Adrenal gland (tissue), 19 donors: ENCODE measurements at regions of chr7 and their contacts with region 1.

Region 1: GRCh38 chr7:992709-993607 is 10.0 kb downstream of the CYP2W1 start:
- DNase-seq: peak; percentile 97 to 99 (median 98)
- H3K4me3 ChIP-seq: no peak overlapping the region
- H3K27ac ChIP-seq: no peak overlapping the region
- H3K4me1 ChIP-seq: peaks cover 7 to 14% of the 10 kb centered on the region in 2 donors
- H3K27me3 ChIP-seq: no peaks in the 10 kb centered on the region
- CTCF ChIP-seq: peak; percentile 96 to 100 (median 100)
- POLR2A ChIP-seq: peak in 1 of 2 donors; percentile 24

Region 2: GRCh38 chr7:1065263-1066260 is 72.6 kb after region 1 on chr7:
- intact Hi-C with region 1: loop called (anchors 2 kb)
- DNase-seq: peak; percentile 77 to 91 (median 90)
- H3K4me3 ChIP-seq: peak overlapping the region in 1 of 4 donors; percentile 12
- H3K27ac ChIP-seq: no peak overlapping the region
- H3K4me1 ChIP-seq: peaks cover 4 to 9% of the 10 kb centered on the region in 2 donors
- H3K27me3 ChIP-seq: no peaks in the 10 kb centered on the region
- CTCF ChIP-seq: peak; percentile 88 to 98 (median 93)
- POLR2A ChIP-seq: no peak

Region 3: GRCh38 chr7:1144269-1144771 is 151.4 kb after region 1 on chr7:
- intact Hi-C with region 1: loop called in 1 of 2 experiments (anchors 5 kb)
- DNase-seq: peak; percentile 61 to 88 (median 82)
- H3K4me3 ChIP-seq: no peak overlapping the region
- H3K27ac ChIP-seq: no peak overlapping the region
- H3K4me1 ChIP-seq: peaks cover 0 to 9% of the 10 kb centered on the region in 2 donors
- H3K27me3 ChIP-seq: no peaks in the 10 kb centered on the region
- CTCF ChIP-seq: peak in 5 of 6 experiments; percentile 48 to 74 (median 65)
- POLR2A ChIP-seq: no peak

Region 4: DNA sequence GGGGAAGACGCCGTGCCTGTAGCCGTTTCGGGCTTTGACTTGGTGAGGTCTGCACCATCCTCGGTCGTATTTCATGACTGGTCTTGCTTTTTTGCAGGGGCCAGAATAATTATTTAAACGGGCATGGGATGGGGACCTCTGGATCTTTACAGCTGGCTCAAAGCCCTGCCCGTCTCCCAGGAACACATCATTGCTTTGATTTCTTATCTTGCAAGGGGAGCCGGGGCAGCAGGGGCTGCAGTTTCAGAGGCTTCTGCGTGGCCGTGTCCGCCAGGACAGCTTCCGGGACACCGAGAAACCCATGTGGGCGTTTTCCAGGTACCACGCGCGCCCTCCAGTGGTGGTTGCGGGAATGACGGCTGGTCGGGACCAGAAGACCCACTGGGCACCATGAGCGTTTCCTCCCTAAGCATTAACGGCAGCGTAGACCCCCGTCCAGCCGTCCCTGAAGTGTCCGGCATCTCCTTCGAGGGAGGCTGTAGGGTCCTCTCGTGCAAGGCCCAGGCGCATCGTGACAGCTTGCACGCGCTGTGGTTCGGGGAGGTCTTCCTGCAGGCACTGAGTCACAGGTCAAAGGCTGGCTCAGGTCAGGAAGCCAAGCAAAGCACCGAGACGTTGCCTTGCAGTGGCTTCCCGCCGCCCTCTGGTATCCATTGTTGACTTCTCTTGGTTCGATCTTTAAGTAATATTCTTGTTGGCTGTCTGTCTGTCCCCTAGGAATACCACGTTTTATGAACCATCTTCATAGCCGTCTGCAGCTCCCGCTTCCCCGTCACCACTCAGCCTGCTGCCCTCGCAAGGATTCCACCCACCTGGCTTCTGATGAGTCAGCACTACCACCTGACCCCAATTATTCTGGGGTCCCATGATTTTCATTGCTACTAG is 183.3 kb after region 1 on chr7:
- intact Hi-C with region 1: loop called in 1 of 2 experiments (anchors 10 kb)
- DNase-seq: peak; percentile 77 to 93 (median 83)
- H3K4me3 ChIP-seq: peak overlapping the region in 1 of 4 donors; percentile 40
- H3K27ac ChIP-seq: peak overlapping the region in 1 of 5 donors; percentile 38
- H3K4me1 ChIP-seq: peaks cover 0 to 8% of the 10 kb centered on the region in 2 donors
- H3K27me3 ChIP-seq: no peaks in the 10 kb centered on the region
- CTCF ChIP-seq: peak; percentile 68 to 92 (median 86)
- POLR2A ChIP-seq: no peak